ENCODE measurements at regions of chr16 and their contacts with region 1.

Region 1: GRCh38 chr16:3509470-3509928 is 8.7 kb downstream of the CLUAP1 start:
- DNase-seq: no peak
- ATAC-seq: no peak
- H3K4me3 ChIP-seq: no peak overlapping the region
- H3K27ac ChIP-seq: peak overlapping the region in 1 of 12 donors; percentile 42
- H3K4me1 ChIP-seq: peaks cover 0 to 10% (median 0%) of the 10 kb centered on the region in 12 donors
- H3K27me3 ChIP-seq: no peaks in the 10 kb centered on the region
- CTCF ChIP-seq: no peak
- POLR2A ChIP-seq: no peak

Region 2: GRCh38 chr16:3182608-3183444 is 326.7 kb before region 1 on chr16:
- intact Hi-C with region 1: loop called in 2 of 10 experiments (anchors 10 kb)
- DNase-seq: no peak
- ATAC-seq: peak in 2 of 4 donors; percentile 38 to 58
- H3K4me3 ChIP-seq: peak overlapping the region in 10 of 12 donors; percentile 12 to 48 (median 20)
- H3K27ac ChIP-seq: no peak overlapping the region
- H3K4me1 ChIP-seq: peaks cover 0 to 23% (median 10%) of the 10 kb centered on the region in 12 donors
- H3K27me3 ChIP-seq: peaks cover 41 to 99% (median 95%) of the 10 kb centered on the region in 9 donors
- CTCF ChIP-seq: peak in 7 of 12 donors; percentile 13 to 37 (median 26)
- POLR2A ChIP-seq: no peak

Region 3: DNA sequence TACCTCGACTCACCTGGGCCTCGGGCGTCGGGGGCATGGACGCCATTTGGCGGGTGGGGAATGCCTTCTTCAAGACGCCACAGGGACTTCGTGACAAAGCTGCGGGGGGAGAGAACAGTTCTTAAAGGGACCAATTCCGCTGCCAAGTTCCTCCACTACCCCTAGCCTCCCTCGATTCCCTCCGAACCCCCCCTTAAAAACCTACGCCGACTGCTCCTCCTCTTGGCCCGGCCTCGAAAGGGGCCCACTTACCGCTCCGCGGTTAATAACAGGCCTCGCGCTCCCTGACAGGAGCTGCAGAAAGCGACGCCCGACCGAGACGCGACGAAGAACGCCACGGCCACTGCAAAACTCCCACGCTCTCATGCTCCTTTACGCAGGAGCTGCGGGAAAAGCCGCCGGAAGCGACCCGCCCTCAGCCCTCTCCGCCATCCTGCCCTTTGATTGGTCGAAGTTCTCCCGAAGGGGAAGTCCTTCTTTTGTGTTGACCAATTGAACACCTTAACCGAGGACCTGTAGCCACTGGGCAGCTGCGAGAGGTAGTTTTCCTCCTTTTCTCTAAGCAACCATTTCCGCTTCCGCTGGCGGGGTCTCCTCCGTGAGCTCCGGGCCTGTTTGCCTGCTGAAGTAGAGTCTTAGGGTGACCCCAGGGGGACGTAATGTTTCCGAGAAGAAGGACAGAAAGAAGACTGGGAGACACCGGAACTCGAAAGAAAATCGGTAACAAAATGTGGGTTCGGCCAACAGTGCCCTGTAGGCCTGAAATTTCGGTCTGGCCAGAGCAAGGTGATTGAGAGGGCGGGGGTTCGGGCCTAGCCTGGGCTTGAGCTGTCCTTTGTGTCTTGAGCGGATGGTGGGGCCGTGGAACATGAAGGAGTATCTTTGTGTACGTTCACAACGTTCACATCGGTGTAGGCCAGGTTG is 66.1 kb before region 1 on chr16 and contains the starts of genes NAA60 and ZNF597:
- intact Hi-C with region 1: no loop called
- DNase-seq: peak; percentile 85 to 88 (median 87)
- ATAC-seq: peak; percentile 98 to 99 (median 98)
- H3K4me3 ChIP-seq: peak within 1 kb of the TSS; percentile 49 to 86 (median 66)
- H3K27ac ChIP-seq: peak within 1 kb of the TSS; percentile 73 to 91 (median 83)
- H3K4me1 ChIP-seq: peaks cover 0 to 25% (median 9%) of the 10 kb centered on the region in 12 donors
- H3K27me3 ChIP-seq: no peaks in the 10 kb centered on the region
- CTCF ChIP-seq: no peak
- POLR2A ChIP-seq: peak in 1 of 2 donors; percentile 25
- total RNA-seq, gene NAA60: 30.3 to 61.9 (median 37.0) TPM
- total RNA-seq, gene ZNF597: 1.5 to 3.3 (median 1.8) TPM

Region 4: GRCh38 chr16:3637371-3637923 is 127.9 kb after region 1 on chr16:
- intact Hi-C with region 1: no loop called
- DNase-seq: no peak
- ATAC-seq: no peak
- H3K4me3 ChIP-seq: no peak overlapping the region
- H3K27ac ChIP-seq: peak overlapping the region in 1 of 12 donors; percentile 49
- H3K4me1 ChIP-seq: peaks cover 0 to 11% (median 0%) of the 10 kb centered on the region in 12 donors
- H3K27me3 ChIP-seq: no peaks in the 10 kb centered on the region
- CTCF ChIP-seq: no peak
- POLR2A ChIP-seq: no peak

Measured in heart left ventricle (tissue), 16 donors.